ENCODE measurements at regions of chr14 and their contacts with region 1.

Region 1: DNA sequence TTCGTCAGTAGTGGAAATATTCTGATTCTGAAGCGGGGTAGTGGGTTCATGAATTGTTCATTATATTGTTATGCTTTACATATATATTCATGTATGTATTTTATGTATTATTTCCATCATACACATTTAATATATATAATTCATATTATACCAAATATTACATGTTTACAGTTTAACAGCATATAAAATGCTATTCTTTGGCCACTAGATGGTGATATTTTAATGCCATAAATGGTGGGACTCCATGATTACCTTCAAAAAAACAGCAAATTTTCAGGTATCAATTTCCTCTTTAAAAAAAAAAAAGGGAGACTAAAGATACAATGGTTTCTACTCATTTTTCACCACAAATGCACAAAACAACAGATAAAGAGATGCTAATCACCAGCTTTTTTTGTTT is 41.0 kb downstream of the BDKRB1 start:
- DNase-seq: peak; percentile 42
- ATAC-seq: no peak
- H3K4me3 ChIP-seq: no peak overlapping the region
- H3K4me3 Mint-ChIP-seq: no peak overlapping the region
- H3K27ac ChIP-seq: no peak overlapping the region
- H3K27ac Mint-ChIP-seq: no peak overlapping the region
- H3K4me1 ChIP-seq: no peaks in the 10 kb centered on the region
- H3K4me1 Mint-ChIP-seq: no peaks in the 10 kb centered on the region
- H3K27me3 ChIP-seq: no peaks in the 10 kb centered on the region
- H3K27me3 Mint-ChIP-seq: no peaks in the 10 kb centered on the region
- CTCF ChIP-seq: peak; percentile 82

Region 2: DNA sequence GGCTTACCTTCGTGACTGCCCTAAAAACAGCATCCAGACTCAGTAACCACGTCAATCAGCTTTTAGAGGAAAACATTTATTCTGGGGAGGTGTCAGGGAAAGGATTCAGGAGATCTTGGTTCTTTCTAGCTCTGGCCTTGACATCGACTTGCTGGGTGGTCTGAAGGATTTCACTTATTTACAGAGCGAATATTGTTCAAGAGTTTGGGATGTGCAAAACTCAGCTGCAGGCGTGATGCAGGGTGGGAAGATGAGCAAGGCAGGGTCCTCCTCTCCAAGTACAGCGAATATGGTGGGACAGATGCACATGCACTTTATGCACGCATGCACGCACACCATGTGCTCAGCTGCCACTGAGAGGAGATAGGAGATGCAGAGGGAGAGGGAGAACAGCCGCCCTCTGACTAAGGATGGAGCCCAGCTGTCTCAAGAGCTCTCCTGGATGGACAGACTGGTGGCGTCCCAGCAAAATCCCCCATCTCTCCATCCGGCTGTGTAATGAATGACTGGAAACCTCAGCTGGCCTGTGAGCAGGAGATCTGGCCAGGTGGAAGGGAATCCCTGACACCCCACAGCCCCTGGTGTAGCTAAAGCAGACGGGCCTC is 65.4 kb before region 1 on chr14:
- CTCF ChIA-PET with region 1: no interaction called
- POLR2A ChIA-PET with region 1: no interaction called
- intact Hi-C with region 1: no loop called
- DNase-seq: no peak
- ATAC-seq: no peak
- H3K4me3 ChIP-seq: no peak overlapping the region
- H3K4me3 Mint-ChIP-seq: no peak overlapping the region
- H3K27ac ChIP-seq: no peak overlapping the region
- H3K27ac Mint-ChIP-seq: no peak overlapping the region
- H3K4me1 ChIP-seq: no peaks in the 10 kb centered on the region
- H3K4me1 Mint-ChIP-seq: no peaks in the 10 kb centered on the region
- H3K27me3 ChIP-seq: peaks cover 0 to 2% (median 0%) of the 10 kb centered on the region in 4 experiments
- H3K27me3 Mint-ChIP-seq: peaks cover 6% of the 10 kb centered on the region
- CTCF ChIP-seq: no peak

Region 3: GRCh38 chr14:96309896-96310330 is 12.9 kb after region 1 on chr14:
- CTCF ChIA-PET with region 1: interaction called, 15 read pairs
- POLR2A ChIA-PET with region 1: no interaction called
- intact Hi-C with region 1: no loop called
- DNase-seq: no peak
- ATAC-seq: no peak
- H3K4me3 ChIP-seq: no peak overlapping the region
- H3K4me3 Mint-ChIP-seq: no peak overlapping the region
- H3K27ac ChIP-seq: no peak overlapping the region
- H3K27ac Mint-ChIP-seq: no peak overlapping the region
- H3K4me1 ChIP-seq: no peaks in the 10 kb centered on the region
- H3K4me1 Mint-ChIP-seq: no peaks in the 10 kb centered on the region
- H3K27me3 ChIP-seq: no peaks in the 10 kb centered on the region
- H3K27me3 Mint-ChIP-seq: no peaks in the 10 kb centered on the region
- CTCF ChIP-seq: no peak

Region 4: DNA sequence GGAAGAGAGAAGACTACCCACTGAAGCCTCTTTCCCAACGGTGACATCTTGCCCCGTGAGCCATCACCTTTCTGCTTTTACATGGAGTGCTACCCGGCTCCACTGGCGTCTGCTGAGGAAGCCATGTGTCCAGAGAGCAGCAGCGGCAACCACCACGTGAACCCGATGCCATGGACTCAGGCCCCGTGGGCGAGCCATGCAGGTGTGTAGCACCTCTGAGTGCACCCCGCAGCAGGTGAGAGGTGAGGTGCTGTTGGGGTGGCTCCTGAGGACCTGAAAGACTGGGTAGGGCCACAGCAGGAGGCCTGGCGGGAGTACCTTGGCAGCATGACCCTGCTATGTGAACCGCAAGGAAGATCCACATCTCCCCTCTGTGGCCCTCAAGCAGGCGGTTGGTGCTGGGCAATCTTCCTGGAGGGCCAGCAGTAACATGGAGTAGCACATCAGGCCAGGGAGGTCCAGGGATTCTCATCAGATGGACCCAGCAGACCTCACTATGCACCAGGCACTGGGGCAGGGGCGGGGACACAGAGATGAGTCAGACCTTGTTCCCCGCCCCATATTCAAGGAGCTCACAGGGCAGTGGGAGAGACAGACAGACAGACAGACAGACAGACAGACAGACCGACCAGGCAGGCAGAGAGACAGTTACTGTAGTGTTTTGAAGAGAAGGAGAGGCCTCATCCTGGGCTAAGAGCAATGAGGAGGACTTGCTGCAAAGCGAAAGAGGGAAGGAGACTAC is 334.8 kb after region 1 on chr14:
- CTCF ChIA-PET with region 1: no interaction called
- POLR2A ChIA-PET with region 1: no interaction called
- intact Hi-C with region 1: no loop called
- DNase-seq: no peak
- ATAC-seq: no peak
- H3K4me3 ChIP-seq: no peak overlapping the region
- H3K4me3 Mint-ChIP-seq: no peak overlapping the region
- H3K27ac ChIP-seq: no peak overlapping the region
- H3K27ac Mint-ChIP-seq: no peak overlapping the region
- H3K4me1 ChIP-seq: no peaks in the 10 kb centered on the region
- H3K4me1 Mint-ChIP-seq: no peaks in the 10 kb centered on the region
- H3K27me3 ChIP-seq: peaks cover 0 to 6% (median 0%) of the 10 kb centered on the region in 4 experiments
- H3K27me3 Mint-ChIP-seq: no peaks in the 10 kb centered on the region
- CTCF ChIP-seq: no peak

Measured in B cell (primary cell).